Activated T-helper 1 cell treated with anti-CD3 and anti-CD28 coated beads, Interleukin-12 subunit alpha, Interleukin-12 subunit beta, Interleukin-2, Interleukin-4 antibody, amounts not matched to agents 30 ng/mL and 10 ng/mL and 1 ng/mL, durations not matched to agents 14 hours and 24 hours and 36 hours (primary cell): ENCODE measurements at regions of chr18 and their contacts with region 1.

Region 1: DNA sequence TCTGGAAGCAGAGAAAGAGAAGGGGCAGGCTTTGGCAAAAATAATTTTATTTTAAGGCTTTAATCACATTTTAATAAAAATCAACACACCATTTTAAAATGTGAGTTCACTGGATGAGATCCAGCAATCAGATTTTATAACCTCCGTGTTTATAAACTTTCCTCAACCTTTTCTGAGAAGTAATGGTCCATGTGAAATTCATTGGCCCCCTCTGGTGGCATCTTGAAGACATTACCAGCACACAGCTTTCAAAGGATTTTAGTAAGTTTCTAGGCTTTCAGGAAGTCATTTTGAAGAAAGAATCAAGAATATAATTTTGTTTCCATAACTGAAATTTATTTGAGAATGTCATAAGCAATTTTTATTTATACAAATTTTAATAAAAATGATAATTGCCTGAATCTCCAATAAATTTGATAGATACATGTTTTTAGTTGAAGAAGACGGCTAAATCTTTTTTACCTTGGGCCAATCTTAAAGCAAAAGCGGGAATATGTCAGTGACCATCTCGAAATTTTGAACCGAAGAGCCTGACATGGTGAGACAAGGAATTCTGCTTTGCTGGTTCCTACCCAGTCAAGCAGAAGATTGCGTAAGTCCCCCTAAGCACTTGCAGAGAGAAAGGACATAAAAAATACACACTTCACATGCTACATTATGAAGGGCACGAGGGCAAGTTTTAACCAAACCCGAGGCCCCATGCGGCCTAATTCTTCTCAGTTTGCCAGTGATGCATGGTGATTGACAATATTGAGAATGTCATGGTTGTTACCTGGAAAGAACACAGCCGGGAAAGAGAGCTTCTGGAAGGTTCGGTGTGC is 128.4 kb upstream of the CBLN2 start:
- DNase-seq: no peak
- H3K4me3 Mint-ChIP-seq: no peak overlapping the region
- H3K27ac Mint-ChIP-seq: no peak overlapping the region
- H3K4me1 Mint-ChIP-seq: no peaks in the 10 kb centered on the region
- H3K27me3 Mint-ChIP-seq: no peaks in the 10 kb centered on the region

Region 2: DNA sequence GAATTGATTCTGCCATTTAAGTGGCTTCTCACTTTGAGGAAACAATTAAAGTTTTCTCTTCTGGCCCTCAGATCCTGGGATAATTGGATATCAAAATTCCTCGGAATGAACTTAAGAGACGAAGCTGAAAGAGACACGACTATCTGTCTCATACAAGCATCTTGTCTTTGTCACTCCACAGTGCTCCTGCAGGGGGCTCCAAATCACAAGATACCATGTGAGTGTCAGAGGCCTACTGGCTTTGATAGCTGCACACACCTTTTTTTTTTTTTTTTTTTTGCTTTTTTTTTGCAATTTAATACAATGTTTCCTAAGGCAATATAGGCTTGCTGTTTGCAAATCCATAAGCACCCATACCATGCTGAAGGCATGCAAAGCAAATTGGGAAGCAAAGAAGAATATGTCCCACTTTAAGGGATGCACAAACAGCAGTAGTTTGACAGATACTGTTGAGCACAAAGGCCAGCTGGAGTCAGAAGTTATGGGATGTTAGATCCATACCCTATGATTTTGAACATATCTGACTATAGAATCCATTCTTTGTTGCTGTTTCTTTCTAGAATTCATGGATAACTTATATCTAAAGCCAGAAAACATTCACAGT is 19.5 kb before region 1 on chr18:
- intact Hi-C with region 1: loop called (anchors 1 kb)
- DNase-seq: peak; percentile 8
- H3K4me3 Mint-ChIP-seq: no peak overlapping the region
- H3K27ac Mint-ChIP-seq: no peak overlapping the region
- H3K4me1 Mint-ChIP-seq: no peaks in the 10 kb centered on the region
- H3K27me3 Mint-ChIP-seq: no peaks in the 10 kb centered on the region

Region 3: DNA sequence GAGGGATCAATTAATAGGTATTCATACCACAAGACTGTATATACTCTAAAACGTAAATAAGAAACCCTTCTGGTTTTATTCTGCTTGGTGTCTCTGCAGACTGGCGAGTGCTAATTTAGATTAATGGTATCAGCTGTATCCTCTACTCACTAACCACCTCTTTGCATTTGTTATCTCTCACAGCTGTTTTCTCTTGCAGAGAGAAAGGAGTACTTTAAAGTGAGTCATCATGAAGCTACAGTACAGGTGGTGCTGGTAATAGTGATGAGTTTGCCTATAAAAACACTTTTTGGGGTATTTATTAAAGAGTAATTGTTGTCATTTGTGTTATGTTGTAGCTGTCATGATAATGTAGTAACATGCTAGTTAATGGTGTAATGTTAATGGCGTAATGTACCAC is 47.5 kb after region 1 on chr18:
- intact Hi-C with region 1: no loop called
- DNase-seq: no peak
- H3K4me3 Mint-ChIP-seq: no peak overlapping the region
- H3K27ac Mint-ChIP-seq: no peak overlapping the region
- H3K4me1 Mint-ChIP-seq: no peaks in the 10 kb centered on the region
- H3K27me3 Mint-ChIP-seq: no peaks in the 10 kb centered on the region